Left ventricle myocardium inferior (tissue), 1 donor: ENCODE measurements at regions of chr4 and their contacts with region 1.

Region 1: GRCh38 chr4:176340871-176341685 is 21.3 kb downstream of the SPCS3 start:
- DNase-seq: no peak
- H3K4me3 ChIP-seq: peak overlapping the region; percentile 24
- H3K27ac ChIP-seq: no peak overlapping the region
- H3K4me1 ChIP-seq: peaks cover 12% of the 10 kb centered on the region
- H3K27me3 ChIP-seq: no peaks in the 10 kb centered on the region
- CTCF ChIP-seq: peak; percentile 62

Region 2: DNA sequence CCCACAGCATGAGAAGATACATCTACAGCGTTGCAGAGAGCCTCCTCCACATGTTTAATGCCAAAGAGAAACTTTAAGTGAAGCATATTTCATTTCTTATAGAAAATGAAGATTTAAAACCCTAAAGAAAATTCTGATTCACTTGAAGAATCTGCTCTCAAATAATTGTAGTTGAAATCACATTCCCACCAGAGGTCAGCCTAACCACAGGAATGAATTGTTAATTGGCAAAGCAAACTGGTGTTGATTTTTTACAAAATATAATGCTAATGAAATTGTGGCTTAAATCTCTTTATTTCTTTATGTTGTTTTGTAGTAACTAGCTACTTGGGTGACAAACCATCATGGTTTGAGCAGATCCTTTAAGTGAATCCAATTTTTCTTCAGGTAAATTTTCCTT is 306.6 kb before region 1 on chr4:
- intact Hi-C with region 1: loop called (anchors 10 kb)
- DNase-seq: no peak
- H3K4me3 ChIP-seq: no peak overlapping the region
- H3K27ac ChIP-seq: no peak overlapping the region
- H3K4me1 ChIP-seq: no peaks in the 10 kb centered on the region
- H3K27me3 ChIP-seq: no peaks in the 10 kb centered on the region
- CTCF ChIP-seq: peak; percentile 47

Region 3: DNA sequence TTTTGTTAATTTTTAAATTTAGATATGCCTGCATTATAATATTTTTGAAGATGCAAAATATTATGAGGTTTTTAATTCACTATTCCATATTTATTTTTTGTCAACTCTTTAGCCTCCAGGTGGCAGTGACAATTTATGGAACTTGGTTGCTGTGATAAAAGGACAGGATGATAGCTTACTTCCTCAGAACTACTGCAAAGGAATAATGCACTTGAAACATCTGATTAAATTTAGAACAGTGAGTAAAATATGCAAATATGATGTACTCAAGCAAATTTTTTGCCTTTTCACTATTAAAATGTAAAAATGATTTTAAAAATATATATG is 190.8 kb before region 1 on chr4:
- intact Hi-C with region 1: loop called (anchors 5 kb)
- DNase-seq: no peak
- H3K4me3 ChIP-seq: no peak overlapping the region
- H3K27ac ChIP-seq: no peak overlapping the region
- H3K4me1 ChIP-seq: peaks cover 6% of the 10 kb centered on the region
- H3K27me3 ChIP-seq: no peaks in the 10 kb centered on the region
- CTCF ChIP-seq: peak; percentile 61